ENCODE measurements at regions of chr4 and their contacts with region 1.

Region 1: GRCh38 chr4:147866532-147867271 is 134.8 kb downstream of the ARHGAP10 start:
- DNase-seq: peak; percentile 89 to 92 (median 90)
- ATAC-seq: peak; percentile 68 to 89 (median 86)
- H3K4me3 ChIP-seq: no peak overlapping the region
- H3K27ac ChIP-seq: peak overlapping the region in 5 of 12 donors; percentile 0 to 44 (median 7)
- H3K4me1 ChIP-seq: peaks cover 0 to 46% (median 22%) of the 10 kb centered on the region in 12 donors
- H3K27me3 ChIP-seq: no peaks in the 10 kb centered on the region
- CTCF ChIP-seq: peak; percentile 99 to 100 (median 100)
- POLR2A ChIP-seq: no peak

Region 2: GRCh38 chr4:147111033-147111367 is 755.7 kb before region 1 on chr4:
- intact Hi-C with region 1: loop called in 1 of 10 experiments (anchors 10 kb)
- DNase-seq: no peak
- ATAC-seq: no peak
- H3K4me3 ChIP-seq: no peak overlapping the region
- H3K27ac ChIP-seq: no peak overlapping the region
- H3K4me1 ChIP-seq: no peaks in the 10 kb centered on the region
- H3K27me3 ChIP-seq: no peaks in the 10 kb centered on the region
- CTCF ChIP-seq: peak in 8 of 12 donors; percentile 14 to 49 (median 42)
- POLR2A ChIP-seq: no peak

Region 3: DNA sequence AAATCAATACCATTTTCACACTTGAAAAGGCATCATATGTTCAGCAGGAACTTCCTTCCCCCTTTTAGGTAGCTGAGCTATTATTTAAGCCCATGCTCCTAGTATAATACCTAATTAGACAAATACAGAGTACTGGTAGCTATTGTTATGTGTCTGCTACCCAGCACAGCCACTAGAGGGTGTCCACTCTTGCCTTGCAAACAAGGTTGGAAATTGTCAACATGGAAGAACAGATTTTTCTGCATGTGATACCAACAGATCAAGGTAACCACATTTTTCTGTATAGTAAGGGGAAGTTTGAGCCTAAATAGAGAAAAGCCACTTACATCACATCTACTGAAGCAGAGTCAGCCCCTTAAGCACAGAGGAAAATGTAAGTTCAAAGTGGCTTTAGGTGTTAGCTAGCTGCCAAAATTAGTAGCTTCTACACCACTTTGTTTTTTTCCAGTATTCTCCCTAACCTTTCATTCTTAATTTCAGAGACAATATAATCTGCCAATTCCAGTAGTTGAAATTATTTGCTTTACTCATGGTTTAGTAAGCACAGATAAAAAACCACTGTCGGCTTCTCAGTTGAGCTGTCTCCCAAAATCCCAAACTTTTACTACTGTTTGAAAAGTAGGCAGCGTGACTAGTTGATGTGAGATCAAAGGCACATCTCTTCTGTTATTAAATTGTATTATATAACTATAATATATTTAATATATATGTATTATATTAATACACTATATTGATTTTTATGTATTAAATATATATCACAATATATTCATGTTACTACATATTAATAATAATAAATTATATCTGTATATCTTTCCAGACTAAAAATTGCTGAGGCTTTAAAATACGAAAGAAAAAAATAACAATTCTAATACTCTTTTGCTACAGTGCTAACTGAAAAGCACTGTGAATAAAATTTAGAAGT is 347.6 kb before region 1 on chr4:
- intact Hi-C with region 1: loop called in 1 of 10 experiments (anchors 10 kb)
- DNase-seq: peak in 3 of 5 donors; percentile 25 to 45 (median 32)
- ATAC-seq: peak in 2 of 4 donors; percentile 50 to 62
- H3K4me3 ChIP-seq: no peak overlapping the region
- H3K27ac ChIP-seq: no peak overlapping the region
- H3K4me1 ChIP-seq: peaks cover 0 to 28% (median 4%) of the 10 kb centered on the region in 12 donors
- H3K27me3 ChIP-seq: no peaks in the 10 kb centered on the region
- CTCF ChIP-seq: peak; percentile 52 to 80 (median 65)
- POLR2A ChIP-seq: no peak

Region 4: GRCh38 chr4:147617173-147617840 is 249.4 kb before region 1 on chr4 and contains the start of gene TMEM184C:
- intact Hi-C with region 1: loop called in 2 of 10 experiments (anchors 10 kb)
- DNase-seq: peak; percentile 98 to 99 (median 98)
- ATAC-seq: peak; percentile 99 to 100 (median 99)
- H3K4me3 ChIP-seq: peak within 1 kb of the TSS; percentile 60 to 94 (median 86)
- H3K27ac ChIP-seq: peak within 1 kb of the TSS in 11 of 12 donors; percentile 65 to 92 (median 83)
- H3K4me1 ChIP-seq: peaks cover 0 to 47% (median 27%) of the 10 kb centered on the region in 12 donors
- H3K27me3 ChIP-seq: no peaks in the 10 kb centered on the region
- CTCF ChIP-seq: peak in 3 of 12 donors; percentile 7 to 12 (median 9)
- POLR2A ChIP-seq: peak in 1 of 2 donors; percentile 79
- total RNA-seq, gene TMEM184C: 21.1 to 29.4 (median 26.2) TPM

Region 5: GRCh38 chr4:147629783-147630730 is 236.6 kb before region 1 on chr4:
- intact Hi-C with region 1: loop called in 1 of 10 experiments (anchors 10 kb)
- DNase-seq: no peak
- ATAC-seq: no peak
- H3K4me3 ChIP-seq: no peak overlapping the region
- H3K27ac ChIP-seq: no peak overlapping the region
- H3K4me1 ChIP-seq: no peaks in the 10 kb centered on the region
- H3K27me3 ChIP-seq: no peaks in the 10 kb centered on the region
- CTCF ChIP-seq: no peak
- POLR2A ChIP-seq: no peak

Region 6: GRCh38 chr4:147707865-147708672 is 158.6 kb before region 1 on chr4:
- intact Hi-C with region 1: loop called (anchors 1 to 2 kb)
- DNase-seq: peak in 4 of 5 donors; percentile 34 to 57 (median 46)
- ATAC-seq: peak; percentile 45 to 75 (median 74)
- H3K4me3 ChIP-seq: peak overlapping the region in 7 of 12 donors; percentile 3 to 31 (median 11)
- H3K27ac ChIP-seq: no peak overlapping the region
- H3K4me1 ChIP-seq: peaks cover 0 to 7% (median 0%) of the 10 kb centered on the region in 12 donors
- H3K27me3 ChIP-seq: no peaks in the 10 kb centered on the region
- CTCF ChIP-seq: peak; percentile 78 to 95 (median 86)
- POLR2A ChIP-seq: no peak

Region 7: GRCh38 chr4:147725673-147726072 is 141.0 kb before region 1 on chr4:
- intact Hi-C with region 1: loop called in 4 of 10 experiments (anchors 5 to 10 kb)
- DNase-seq: no peak
- ATAC-seq: no peak
- H3K4me3 ChIP-seq: no peak overlapping the region
- H3K27ac ChIP-seq: no peak overlapping the region
- H3K4me1 ChIP-seq: peaks cover 0 to 6% (median 0%) of the 10 kb centered on the region in 12 donors
- H3K27me3 ChIP-seq: no peaks in the 10 kb centered on the region
- CTCF ChIP-seq: no peak
- POLR2A ChIP-seq: no peak

Region 8: DNA sequence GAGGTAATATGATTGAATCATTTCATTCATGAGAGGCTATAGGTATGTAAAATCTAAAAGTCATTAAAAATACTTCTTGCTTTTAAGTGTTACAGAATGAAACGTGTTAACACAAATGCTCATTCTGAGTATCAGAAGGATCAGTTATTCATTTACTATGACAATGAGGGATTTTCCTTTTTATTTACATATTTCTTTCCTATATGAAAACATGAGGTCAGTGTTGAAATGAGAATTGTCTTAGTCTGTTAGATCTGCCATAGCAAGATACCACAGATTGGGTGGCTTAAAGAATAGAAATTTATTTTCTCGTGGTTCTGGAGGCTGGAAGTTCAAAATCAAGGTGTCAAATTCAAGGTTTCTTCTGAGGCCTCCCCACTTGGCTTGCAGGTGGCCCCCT is 46.4 kb after region 1 on chr4:
- intact Hi-C with region 1: no loop called
- DNase-seq: no peak
- ATAC-seq: no peak
- H3K4me3 ChIP-seq: no peak overlapping the region
- H3K27ac ChIP-seq: no peak overlapping the region
- H3K4me1 ChIP-seq: peaks cover 0 to 9% (median 0%) of the 10 kb centered on the region in 12 donors
- H3K27me3 ChIP-seq: no peaks in the 10 kb centered on the region
- CTCF ChIP-seq: no peak
- POLR2A ChIP-seq: no peak